Natural killer cell (primary cell): ENCODE measurements at regions of chr19 and their contacts with region 1.

Region 1: DNA sequence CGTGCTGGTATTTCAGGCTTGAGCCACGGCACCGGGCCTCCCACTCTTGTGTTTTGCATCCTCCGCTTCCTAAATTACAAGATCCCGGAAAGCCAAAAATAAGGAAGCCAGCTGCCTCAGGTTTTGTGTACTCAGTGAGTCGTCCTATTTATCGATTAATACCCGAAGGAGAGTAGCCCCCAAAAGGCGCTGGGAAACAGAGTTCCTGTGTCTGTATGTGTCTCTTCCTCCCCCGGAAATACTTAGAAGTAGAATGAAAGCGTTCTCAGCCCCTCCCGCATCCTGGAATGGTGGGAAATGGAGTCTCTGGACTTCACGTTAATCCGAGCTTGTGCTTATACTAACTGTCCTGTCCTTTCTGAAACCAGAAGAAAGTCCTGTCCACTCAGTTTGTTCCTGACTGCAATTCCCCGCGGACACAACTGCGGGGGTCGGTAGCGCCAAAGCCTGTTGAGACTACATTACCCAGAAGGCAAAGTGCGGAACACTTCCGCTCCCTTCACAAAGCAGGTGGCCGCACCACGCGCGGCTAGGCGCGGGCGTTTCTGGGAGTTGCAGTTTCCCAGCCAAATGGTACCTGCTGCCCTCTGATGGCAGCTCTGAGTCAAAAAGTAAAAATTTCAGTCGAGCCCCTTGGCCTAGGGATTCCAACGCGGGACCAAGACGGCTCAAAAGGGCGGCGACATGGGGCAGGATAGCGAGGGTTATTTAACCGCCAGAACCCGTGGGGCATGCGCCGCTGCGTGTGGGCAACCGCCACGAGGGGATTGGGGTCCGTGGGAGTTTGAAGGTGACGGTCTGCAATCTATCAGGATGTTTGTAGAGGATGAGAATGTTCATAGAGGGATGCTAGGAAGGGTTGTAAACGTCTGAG is 2.2 kb upstream of the GSK3A start:
- DNase-seq: peak; percentile 85 to 96
- ATAC-seq: peak; percentile 52 to 65 (median 52)
- H3K4me3 ChIP-seq: peak overlapping the region; percentile 61
- H3K4me3 Mint-ChIP-seq: peak overlapping the region; percentile 96
- H3K27ac ChIP-seq: peak overlapping the region; percentile 74
- H3K27ac Mint-ChIP-seq: peak overlapping the region; percentile 93 to 98
- H3K4me1 ChIP-seq: peaks cover 41% of the 10 kb centered on the region
- H3K4me1 Mint-ChIP-seq: peaks cover 38 to 63% of the 10 kb centered on the region in 2 donors
- H3K27me3 ChIP-seq: no peaks in the 10 kb centered on the region
- H3K27me3 Mint-ChIP-seq: no peaks in the 10 kb centered on the region
- CTCF ChIP-seq: peak; percentile 76

Region 2: DNA sequence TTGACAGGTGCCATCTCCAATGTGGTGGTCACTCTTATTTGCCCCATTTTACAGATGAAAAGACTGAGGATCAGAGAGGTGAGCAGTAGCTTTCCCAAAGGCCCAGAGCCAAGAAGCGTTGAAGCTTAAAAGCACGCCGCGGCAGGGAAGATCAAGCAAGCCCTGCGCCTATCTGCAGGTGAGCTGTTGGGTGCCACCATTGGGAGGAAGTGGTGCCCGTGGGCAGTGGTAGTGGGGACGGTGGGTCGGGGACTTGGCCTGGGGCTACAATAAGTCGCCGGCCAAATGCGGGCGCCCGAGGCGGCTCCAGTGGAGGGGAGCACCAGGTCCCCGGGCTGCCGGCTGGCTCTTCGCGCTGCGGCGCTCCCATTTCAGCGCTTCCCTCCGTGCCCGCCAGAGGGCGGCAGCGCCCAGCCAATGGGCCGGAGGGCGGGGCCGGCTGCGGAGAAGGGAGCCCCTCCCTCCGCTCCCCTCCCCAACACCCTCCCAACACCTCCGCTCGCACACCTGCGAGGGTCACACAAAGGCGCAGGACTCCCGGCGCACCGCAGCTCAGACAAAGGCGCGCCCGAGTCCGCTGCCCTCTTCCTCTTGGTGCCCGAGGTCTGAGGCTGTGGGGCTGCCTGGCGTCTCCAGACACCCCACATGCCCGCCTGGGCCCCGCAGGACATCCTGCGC is 111.6 kb before region 1 on chr19:
- intact Hi-C with region 1: loop called (anchors 1 kb)
- DNase-seq: peak; percentile 83 to 92
- ATAC-seq: peak; percentile 74 to 86 (median 77)
- H3K4me3 ChIP-seq: peak overlapping the region; percentile 73
- H3K4me3 Mint-ChIP-seq: peak overlapping the region; percentile 80
- H3K27ac ChIP-seq: peak overlapping the region; percentile 49
- H3K27ac Mint-ChIP-seq: peak overlapping the region; percentile 58 to 86
- H3K4me1 ChIP-seq: peaks cover 73% of the 10 kb centered on the region
- H3K4me1 Mint-ChIP-seq: peaks cover 36 to 73% of the 10 kb centered on the region in 2 donors
- H3K27me3 ChIP-seq: no peaks in the 10 kb centered on the region
- H3K27me3 Mint-ChIP-seq: no peaks in the 10 kb centered on the region
- CTCF ChIP-seq: peak; percentile 100

Region 3: DNA sequence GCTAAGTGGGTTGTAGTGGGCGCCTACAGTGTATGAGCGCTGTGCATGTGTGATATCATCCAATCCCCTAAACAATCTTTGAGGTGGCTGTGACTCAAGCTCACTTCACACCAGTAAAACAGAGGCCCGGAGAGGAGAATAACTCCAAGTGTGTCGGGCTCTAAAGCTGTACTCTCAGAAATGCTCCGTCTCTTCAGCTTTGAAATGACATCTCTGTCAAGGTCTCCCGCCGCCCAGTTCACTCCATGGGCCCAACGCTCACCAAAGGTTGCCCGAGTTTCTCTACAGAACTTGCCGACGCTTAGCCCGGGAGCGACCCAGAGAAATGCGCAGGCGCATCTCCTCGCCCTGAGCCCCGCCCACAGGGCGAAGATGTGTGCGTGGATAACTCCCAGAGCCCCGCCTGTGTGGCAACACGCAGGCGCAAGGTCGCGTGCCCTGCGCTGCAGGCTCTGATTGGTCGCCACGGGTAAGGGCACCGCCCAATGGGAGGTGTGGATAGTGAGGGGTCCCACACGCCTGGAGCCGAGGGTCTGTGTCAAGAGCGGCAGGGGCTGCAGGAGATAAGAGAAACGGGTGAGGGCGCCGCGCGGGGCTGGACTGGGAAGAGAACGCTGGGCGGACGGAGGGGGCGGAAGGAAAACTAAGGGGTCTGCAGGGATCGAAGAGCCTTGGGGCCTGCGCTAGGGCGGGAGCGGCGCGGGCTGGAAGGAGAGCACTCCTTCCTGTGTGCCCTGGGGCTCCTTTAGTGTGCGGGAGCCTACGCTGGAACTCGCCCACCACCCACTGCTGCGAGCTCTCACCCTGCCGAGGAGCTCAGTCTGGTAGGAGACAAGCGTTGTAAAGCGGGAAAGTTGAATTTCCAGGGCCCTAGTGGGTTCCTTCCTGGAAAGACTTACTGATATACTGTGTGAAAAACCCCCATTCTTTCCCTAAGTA is 24.5 kb before region 1 on chr19 and contains the start of gene ZNF526:
- intact Hi-C with region 1: loop called (anchors 1 kb)
- DNase-seq: peak; percentile 93 to 99
- ATAC-seq: peak; percentile 73 to 87 (median 78)
- H3K4me3 ChIP-seq: peak within 1 kb of the TSS; percentile 84
- H3K4me3 Mint-ChIP-seq: peak within 1 kb of the TSS; percentile 98
- H3K27ac ChIP-seq: peak within 1 kb of the TSS; percentile 76
- H3K27ac Mint-ChIP-seq: peak within 1 kb of the TSS; percentile 98 to 100
- H3K4me1 ChIP-seq: peaks cover 56% of the 10 kb centered on the region
- H3K4me1 Mint-ChIP-seq: peaks cover 51 to 58% of the 10 kb centered on the region in 2 donors
- H3K27me3 ChIP-seq: no peaks in the 10 kb centered on the region
- H3K27me3 Mint-ChIP-seq: no peaks in the 10 kb centered on the region
- CTCF ChIP-seq: no peak
- total RNA-seq, gene ZNF526: 8.8 to 10.6 (median 10.2) TPM

Region 4: GRCh38 chr19:42254989-42255765 is 10.6 kb after region 1 on chr19 and contains the start of gene ERF:
- intact Hi-C with region 1: loop called (anchors 1 kb)
- DNase-seq: peak; percentile 96 to 97
- ATAC-seq: peak; percentile 77 to 94 (median 88)
- H3K4me3 ChIP-seq: peak within 1 kb of the TSS; percentile 100
- H3K4me3 Mint-ChIP-seq: peak within 1 kb of the TSS; percentile 78
- H3K27ac ChIP-seq: peak within 1 kb of the TSS; percentile 100
- H3K27ac Mint-ChIP-seq: peak within 1 kb of the TSS; percentile 61 to 95
- H3K4me1 ChIP-seq: peaks cover 40% of the 10 kb centered on the region
- H3K4me1 Mint-ChIP-seq: peaks cover 17 to 32% of the 10 kb centered on the region in 2 donors
- H3K27me3 ChIP-seq: no peaks in the 10 kb centered on the region
- H3K27me3 Mint-ChIP-seq: no peaks in the 10 kb centered on the region
- CTCF ChIP-seq: no peak
- total RNA-seq, gene ERF: 58.3 to 115 (median 75.6) TPM

Region 5: DNA sequence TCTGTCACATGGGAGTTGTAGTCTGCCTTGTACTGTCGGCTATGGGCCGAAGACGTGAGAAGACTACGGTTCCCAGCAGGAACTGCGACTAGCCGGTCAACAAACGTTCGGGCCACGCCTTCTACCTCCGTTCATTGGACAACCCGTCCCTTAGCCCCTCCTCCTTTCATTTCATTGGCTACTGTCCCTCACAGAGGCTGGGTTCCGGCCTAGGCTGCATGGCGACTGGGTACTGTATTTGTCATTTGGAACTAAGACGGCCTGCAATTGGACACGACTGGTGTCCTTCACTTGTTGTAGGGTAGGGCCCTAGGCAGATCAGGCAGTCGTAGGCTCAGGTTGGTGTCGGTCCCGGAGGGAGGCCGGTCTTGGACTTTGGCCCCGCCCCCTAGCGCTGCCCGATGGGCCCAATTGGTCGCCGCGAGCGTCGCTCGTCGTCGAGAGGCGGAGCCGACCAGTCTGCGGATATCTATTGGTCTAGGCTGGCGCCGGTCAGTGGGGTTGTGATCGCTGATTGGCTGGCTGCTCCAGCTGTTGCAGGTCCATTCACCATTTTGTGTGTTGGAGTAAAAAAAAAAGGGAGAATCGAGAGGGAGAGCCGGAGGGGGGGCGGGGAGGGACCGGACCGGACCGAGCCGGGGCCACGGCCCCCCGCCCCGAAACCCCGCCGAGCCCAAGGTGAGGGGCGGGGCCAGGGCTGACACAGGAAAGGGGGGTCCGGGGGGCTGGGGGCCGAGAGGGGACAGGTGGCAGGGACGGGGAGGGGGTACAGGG is 24.3 kb after region 1 on chr19 and contains the start of gene CIC:
- intact Hi-C with region 1: loop called (anchors 1 kb)
- DNase-seq: peak; percentile 98 to 100
- ATAC-seq: peak; percentile 68 to 90 (median 75)
- H3K4me3 ChIP-seq: peak within 1 kb of the TSS; percentile 84
- H3K4me3 Mint-ChIP-seq: peak within 1 kb of the TSS; percentile 94
- H3K27ac ChIP-seq: peak within 1 kb of the TSS; percentile 98
- H3K27ac Mint-ChIP-seq: no peak within 1 kb of the TSS
- H3K4me1 ChIP-seq: peaks cover 32% of the 10 kb centered on the region
- H3K4me1 Mint-ChIP-seq: no peaks in the 10 kb centered on the region
- H3K27me3 ChIP-seq: no peaks in the 10 kb centered on the region
- H3K27me3 Mint-ChIP-seq: no peaks in the 10 kb centered on the region
- CTCF ChIP-seq: no peak
- total RNA-seq, gene CIC: 95.4 to 121 (median 108) TPM

Region 6: DNA sequence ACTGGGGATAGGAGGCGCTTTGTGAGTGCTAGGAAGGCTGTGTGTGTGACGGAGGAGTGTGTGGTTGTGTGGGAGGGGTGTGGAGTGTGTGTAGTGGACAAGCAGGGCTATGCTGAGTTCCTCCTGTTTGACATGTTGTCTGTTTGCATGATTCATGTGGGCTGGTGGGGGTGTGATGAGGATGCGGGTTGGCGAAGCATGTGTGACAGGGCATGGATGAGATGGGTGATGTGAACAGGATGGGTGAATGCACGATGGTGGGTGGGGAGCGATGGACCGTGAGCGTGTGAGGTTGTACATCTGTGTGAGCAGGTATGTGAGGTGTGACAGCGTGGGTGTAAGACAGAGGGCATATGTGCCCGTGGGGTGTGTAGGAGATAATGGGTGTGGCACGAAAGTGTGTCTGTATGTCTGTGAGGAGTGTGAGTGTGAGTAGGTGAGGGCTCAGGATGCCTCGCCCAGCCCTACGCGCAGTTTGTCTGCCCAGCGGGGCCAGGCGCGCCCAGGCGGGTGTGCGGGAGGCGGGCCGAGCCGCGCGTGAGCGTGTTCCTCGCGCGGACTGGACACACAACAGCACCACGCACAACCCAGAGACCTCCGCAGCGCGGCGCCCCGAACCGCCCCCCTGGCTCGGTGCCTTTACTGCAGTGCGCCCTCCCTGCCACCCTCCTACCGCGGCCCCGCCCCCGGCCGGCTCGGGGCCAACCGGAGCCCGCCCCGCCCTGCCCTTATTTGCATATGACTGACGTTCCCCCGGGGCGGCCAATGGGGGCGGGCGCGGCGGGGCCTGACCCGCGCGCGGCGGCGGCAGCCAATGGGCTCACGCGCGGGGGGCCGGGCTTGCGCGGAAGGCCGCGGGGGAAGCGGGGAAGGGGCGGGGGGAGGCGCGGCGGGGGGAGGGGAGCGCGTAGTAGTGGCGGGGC is 38.8 kb after region 1 on chr19:
- intact Hi-C with region 1: loop called (anchors 1 kb)
- DNase-seq: peak; percentile 91 to 97
- ATAC-seq: peak; percentile 63 to 86 (median 72)
- H3K4me3 ChIP-seq: peak overlapping the region; percentile 52
- H3K4me3 Mint-ChIP-seq: no peak overlapping the region
- H3K27ac ChIP-seq: peak overlapping the region; percentile 99
- H3K27ac Mint-ChIP-seq: no peak overlapping the region
- H3K4me1 ChIP-seq: peaks cover 67% of the 10 kb centered on the region
- H3K4me1 Mint-ChIP-seq: peaks cover 28 to 35% of the 10 kb centered on the region in 2 donors
- H3K27me3 ChIP-seq: no peaks in the 10 kb centered on the region
- H3K27me3 Mint-ChIP-seq: no peaks in the 10 kb centered on the region
- CTCF ChIP-seq: no peak

Region 7: DNA sequence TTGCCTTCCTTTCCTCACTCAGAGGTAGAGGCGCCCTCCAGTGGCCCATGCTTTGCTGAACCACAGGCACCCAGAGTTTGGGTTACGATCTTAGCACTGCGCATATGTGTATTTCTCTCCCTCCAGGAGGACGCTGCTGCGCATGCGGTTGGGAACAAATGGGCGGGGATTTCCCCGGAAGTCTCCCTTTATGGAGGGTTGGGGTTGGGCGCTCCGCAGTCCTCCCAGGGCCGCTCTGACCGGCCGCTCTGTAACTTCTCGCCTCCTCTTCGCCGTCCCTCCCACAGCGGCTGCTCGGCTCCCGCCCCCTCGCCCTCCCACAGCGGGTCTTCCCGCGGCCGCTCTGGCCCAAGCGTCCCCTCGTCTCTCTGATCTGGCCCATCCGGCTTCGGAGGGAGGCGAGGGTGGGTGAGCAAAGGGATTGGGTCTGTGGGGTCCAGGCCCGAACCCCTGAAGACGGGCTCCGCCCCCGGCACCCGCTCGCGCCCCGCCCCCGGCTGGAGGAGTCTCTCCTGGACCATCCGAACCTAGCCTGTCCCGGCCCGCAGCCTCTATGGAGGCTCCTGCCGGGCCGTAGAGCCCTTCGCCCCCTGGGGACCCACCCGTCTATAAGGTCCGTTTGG is 80.8 kb after region 1 on chr19 and contains the start of gene MEGF8:
- intact Hi-C with region 1: no loop called
- DNase-seq: peak; percentile 96 to 99
- ATAC-seq: peak; percentile 88 to 97 (median 91)
- H3K4me3 ChIP-seq: peak within 1 kb of the TSS; percentile 83
- H3K4me3 Mint-ChIP-seq: peak within 1 kb of the TSS; percentile 95
- H3K27ac ChIP-seq: peak within 1 kb of the TSS; percentile 62
- H3K27ac Mint-ChIP-seq: peak within 1 kb of the TSS; percentile 65 to 79
- H3K4me1 ChIP-seq: peaks cover 20% of the 10 kb centered on the region
- H3K4me1 Mint-ChIP-seq: peaks cover 17 to 29% of the 10 kb centered on the region in 2 donors
- H3K27me3 ChIP-seq: peaks cover 8% of the 10 kb centered on the region
- H3K27me3 Mint-ChIP-seq: peaks cover 15 to 19% of the 10 kb centered on the region in 2 donors
- CTCF ChIP-seq: peak; percentile 82
- total RNA-seq, gene MEGF8: 8.1 to 11.3 (median 10.5) TPM

Region 8: DNA sequence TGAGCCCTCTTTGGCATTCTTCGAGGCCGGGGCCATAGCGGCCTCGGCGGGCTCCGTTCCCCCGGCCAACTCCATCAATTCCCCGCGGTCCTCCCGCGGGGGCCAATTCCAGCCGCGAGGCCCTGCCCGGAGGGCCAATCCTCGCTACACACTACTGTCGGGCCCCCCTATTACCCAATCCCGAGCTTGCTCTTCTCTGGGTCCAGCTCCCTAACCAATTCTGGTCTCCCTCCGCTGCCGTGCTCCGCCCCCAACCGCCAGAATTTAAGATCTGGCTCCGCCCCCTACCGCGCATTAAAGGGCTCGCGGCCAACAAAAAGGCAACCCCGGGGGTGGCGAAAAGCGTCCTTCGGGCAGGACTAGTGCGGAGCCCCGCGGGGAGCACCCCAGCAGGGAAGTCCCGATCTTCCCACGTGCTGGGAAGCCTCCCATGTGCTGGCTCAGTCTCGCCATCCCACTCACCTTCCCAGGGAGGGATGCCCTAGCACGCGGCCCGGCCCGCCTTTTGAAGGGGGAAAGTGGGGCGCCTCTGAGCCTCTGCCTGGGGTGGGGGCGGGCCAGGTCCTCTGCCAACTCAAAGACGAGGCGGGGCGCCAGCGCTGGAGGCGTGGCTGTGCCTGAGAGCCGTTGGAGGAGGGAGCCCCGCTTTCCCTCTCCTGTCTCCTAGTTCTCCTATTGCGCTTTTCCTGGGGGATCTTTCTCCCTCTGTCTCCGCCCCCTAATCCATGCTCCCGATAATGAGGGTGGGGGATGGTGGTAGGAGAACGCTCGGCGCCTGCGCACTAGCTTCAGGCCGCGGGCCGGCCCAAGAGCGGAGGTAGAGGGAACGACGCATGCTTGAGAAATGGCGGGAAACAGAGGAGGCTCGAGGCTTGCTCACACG is 179.1 kb after region 1 on chr19:
- intact Hi-C with region 1: loop called (anchors 2 kb)
- DNase-seq: peak; percentile 91 to 96
- ATAC-seq: peak; percentile 90 to 97 (median 93)
- H3K4me3 ChIP-seq: peak overlapping the region; percentile 86
- H3K4me3 Mint-ChIP-seq: peak overlapping the region; percentile 98
- H3K27ac ChIP-seq: peak overlapping the region; percentile 85
- H3K27ac Mint-ChIP-seq: peak overlapping the region; percentile 90 to 99
- H3K4me1 ChIP-seq: peaks cover 35% of the 10 kb centered on the region
- H3K4me1 Mint-ChIP-seq: peaks cover 33 to 47% of the 10 kb centered on the region in 2 donors
- H3K27me3 ChIP-seq: no peaks in the 10 kb centered on the region
- H3K27me3 Mint-ChIP-seq: no peaks in the 10 kb centered on the region
- CTCF ChIP-seq: no peak